Activated naive CD4-positive, alpha-beta T cell treated with anti-CD3 and anti-CD28 coated beads for 36 hours (primary cell): ENCODE measurements at regions of chr19 and their contacts with region 1.

Region 1: DNA sequence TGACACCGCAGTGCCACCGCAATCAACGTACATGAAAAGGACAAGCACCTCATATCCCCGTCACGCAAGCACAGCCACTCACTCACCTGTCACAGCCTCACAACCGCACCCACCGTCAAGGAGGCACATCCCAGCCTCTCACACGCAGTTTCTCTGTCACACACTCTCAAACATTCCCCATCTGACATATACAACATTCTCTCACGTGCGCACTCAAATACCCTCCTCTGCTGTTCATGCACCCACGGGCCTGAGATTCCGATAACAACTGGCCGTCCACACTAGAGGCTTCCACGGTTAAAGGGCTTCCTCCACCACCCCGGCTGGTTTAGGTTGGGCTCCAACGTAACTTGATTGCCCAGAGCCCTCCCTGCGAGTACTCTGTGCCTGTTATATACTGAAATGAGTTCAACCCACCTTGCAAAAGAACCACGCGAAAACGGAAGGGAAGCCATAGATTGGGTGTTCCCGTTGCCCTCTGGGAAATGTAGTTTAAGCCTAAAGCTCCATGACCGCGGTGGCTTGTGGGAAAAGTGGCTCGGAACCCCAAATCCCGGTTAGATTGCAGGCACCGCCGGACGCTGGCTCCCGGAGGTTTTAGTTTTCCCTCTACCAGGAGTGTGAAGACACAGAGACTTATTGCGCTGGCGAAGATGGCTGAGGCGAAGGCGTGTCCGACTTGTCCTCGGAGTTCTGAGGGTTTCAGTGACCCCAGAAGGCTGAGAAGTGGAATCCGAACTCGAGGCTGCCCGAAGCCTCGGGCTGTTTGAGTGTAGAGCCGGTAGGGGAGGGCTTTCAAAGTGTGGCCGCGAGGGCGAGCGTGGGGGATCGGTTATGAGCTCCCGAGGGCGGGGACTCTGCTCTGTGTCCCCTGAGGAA is at the start of gene ZNF573:
- DNase-seq: peak; percentile 91
- H3K4me3 Mint-ChIP-seq: peak within 1 kb of the TSS; percentile 96
- H3K27ac Mint-ChIP-seq: peak within 1 kb of the TSS; percentile 99
- H3K4me1 Mint-ChIP-seq: peaks cover 25% of the 10 kb centered on the region
- H3K27me3 Mint-ChIP-seq: no peaks in the 10 kb centered on the region
- total RNA-seq, gene ZNF573: 6.1 to 7.3 TPM

Region 2: DNA sequence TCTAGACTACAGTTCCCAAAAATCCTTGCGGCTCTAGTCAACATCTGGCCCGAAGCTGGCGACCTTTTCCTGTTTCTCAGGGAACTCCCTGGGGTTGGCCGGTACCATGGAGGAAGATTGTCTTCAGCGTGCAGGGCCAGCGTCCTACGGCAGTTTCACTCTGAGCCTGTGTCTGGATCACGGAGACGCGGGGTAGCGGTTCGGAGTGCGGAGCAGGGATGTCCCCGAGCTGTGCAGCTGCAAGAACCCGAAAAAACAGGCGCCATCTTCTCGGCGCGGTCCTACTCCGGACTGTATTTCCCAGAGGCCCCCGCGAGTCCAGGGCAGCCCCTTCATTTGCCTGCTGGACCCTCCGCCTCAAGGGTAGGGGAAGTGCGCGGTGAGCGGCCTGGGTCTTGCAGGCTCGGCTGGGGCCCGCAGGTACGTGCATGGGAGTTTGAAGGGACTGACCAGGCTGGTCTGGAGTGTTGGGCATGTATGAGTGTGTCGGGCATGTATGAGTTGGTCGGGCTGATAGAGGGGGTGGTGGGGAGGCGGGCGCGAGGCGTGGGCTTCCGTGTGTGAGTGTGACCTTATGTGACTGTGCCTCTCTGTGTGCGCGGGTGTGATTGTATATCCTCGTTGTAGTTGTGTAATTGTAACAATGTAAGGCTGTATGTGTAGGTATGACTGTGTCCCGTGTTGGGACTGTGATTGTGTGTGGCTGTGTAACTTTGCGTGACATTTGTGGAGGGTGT is 561.3 kb before region 1 on chr19 and contains the start of gene ZNF383:
- CTCF ChIA-PET with region 1: no interaction called
- intact Hi-C with region 1: loop called (anchors 1 kb)
- DNase-seq: peak; percentile 87
- H3K4me3 Mint-ChIP-seq: peak within 1 kb of the TSS; percentile 88
- H3K27ac Mint-ChIP-seq: peak within 1 kb of the TSS; percentile 92
- H3K4me1 Mint-ChIP-seq: peaks cover 16% of the 10 kb centered on the region
- H3K27me3 Mint-ChIP-seq: no peaks in the 10 kb centered on the region
- total RNA-seq, gene ZNF383: 8.4 to 9.1 TPM

Region 3: DNA sequence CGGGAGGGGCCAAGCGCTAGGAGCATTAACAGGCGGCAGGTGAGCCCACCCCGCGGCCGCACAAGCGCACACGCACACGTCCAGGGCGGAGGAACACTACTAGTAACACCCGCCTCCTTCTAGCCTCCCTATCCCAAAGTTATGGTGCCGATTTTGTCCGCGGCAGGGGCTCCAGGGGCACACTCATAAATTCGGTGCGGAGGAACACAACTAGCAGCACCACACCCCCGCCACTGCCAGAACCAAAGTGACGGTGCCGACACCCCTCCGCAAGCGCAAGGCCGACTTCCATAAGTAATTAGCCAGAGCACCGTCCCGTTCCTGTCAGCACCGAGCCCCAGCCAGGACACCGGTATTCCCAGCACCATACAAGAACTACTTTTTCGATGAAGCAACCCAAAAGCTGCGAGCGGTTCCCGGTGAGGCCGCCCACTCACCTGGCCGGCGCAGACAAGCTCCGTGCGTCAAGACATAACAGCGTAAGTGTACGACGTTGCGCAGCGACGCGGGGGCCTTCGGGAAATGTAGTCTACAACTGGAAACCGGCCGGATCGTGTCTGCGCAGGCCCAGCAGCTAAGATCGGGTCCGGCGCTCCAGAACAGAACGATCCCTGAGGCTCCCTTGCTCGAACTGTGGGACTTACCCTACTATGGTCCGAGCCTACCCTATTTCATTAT is 184.9 kb before region 1 on chr19 and contains the starts of genes ZNF540 and ZNF571:
- CTCF ChIA-PET with region 1: no interaction called
- intact Hi-C with region 1: loop called (anchors 1 kb)
- DNase-seq: peak; percentile 96
- H3K4me3 Mint-ChIP-seq: peak within 1 kb of the TSS; percentile 99
- H3K27ac Mint-ChIP-seq: peak within 1 kb of the TSS; percentile 97
- H3K4me1 Mint-ChIP-seq: peaks cover 17% of the 10 kb centered on the region
- H3K27me3 Mint-ChIP-seq: no peaks in the 10 kb centered on the region
- total RNA-seq, gene ZNF540: 1.0 to 1.9 TPM
- total RNA-seq, gene ZNF571: 2.8 to 3.5 TPM

Region 4: DNA sequence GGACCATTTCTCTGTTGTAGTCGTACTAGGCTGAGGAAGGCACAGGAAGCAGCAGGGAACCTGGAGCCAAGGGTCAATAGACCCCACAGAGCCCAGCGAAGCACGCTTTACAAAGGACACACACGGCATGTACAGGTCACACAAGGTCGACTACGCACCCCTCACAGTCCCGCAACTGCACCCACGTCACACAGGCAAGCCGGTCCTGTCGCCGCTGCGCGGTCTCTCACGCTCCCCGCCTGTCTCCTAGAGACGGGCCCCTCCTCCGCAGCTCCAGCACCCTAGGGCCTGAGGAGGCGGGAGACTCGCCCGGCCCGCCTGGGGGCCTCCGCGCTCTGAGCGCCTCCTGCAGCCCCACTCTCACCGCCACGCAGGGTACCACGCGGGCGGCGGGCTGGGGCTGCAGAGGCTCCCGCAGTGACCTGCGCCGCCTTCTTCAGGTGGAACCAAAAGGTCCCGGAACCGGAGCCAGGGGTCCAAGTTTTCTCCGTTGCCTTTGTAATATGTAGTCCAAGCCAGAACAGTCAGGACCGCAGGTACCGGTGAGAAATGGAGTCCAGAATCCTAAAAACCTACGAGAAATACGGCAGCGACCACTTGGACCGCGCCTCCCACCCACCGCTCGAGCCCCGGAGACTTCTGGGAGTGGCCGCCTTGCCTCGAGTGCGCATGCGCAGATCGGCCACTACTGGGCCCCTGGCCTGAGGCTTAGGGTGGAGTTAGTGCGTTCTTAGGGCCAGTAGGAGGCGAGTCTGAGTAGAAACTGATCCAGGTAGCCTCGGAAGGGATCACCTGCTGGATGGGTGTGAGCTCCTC is 60.0 kb before region 1 on chr19 and contains the start of gene ZNF607:
- CTCF ChIA-PET with region 1: no interaction called
- intact Hi-C with region 1: loop called (anchors 1 kb)
- DNase-seq: peak; percentile 86
- H3K4me3 Mint-ChIP-seq: peak within 1 kb of the TSS; percentile 81
- H3K27ac Mint-ChIP-seq: peak within 1 kb of the TSS; percentile 84
- H3K4me1 Mint-ChIP-seq: peaks cover 13% of the 10 kb centered on the region
- H3K27me3 Mint-ChIP-seq: no peaks in the 10 kb centered on the region
- total RNA-seq, gene ZNF607: 3.4 to 4.1 TPM

Region 5: GRCh38 chr19:37893845-37894575 is 114.6 kb after region 1 on chr19:
- CTCF ChIA-PET with region 1: no interaction called
- intact Hi-C with region 1: no loop called
- DNase-seq: no peak
- H3K4me3 Mint-ChIP-seq: no peak overlapping the region
- H3K27ac Mint-ChIP-seq: no peak overlapping the region
- H3K4me1 Mint-ChIP-seq: peaks cover 2% of the 10 kb centered on the region
- H3K27me3 Mint-ChIP-seq: peaks cover 9% of the 10 kb centered on the region

Region 6: DNA sequence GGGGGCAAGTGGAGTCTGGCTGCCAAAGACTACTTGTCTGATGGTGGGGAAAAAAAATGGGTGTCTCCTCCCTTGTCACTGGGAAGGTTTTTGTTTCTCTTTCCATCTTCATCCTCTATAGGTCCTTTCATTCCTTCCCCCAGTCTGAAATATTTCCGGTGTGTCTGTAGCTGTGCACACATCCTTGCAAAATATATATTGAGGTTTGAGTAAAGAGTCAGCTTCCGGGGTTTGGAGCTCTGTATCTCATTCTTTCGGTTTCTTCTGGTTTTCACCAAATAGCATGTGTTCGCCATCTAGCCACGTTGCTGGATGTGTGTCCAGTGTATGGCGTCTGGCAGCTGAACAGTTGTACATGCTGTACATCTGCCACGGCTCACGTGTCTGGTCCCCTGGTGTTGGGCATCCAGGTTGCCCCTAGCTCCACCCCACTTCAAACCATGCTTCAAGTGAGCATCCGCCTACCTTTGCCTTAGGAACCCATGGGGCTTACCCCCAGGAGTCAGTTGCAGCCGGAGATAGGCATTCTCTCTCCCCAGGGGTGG is 269.8 kb after region 1 on chr19:
- CTCF ChIA-PET with region 1: no interaction called
- intact Hi-C with region 1: loop called (anchors 1 kb)
- DNase-seq: peak; percentile 67
- H3K4me3 Mint-ChIP-seq: peak overlapping the region; percentile 73
- H3K27ac Mint-ChIP-seq: peak overlapping the region; percentile 96
- H3K4me1 Mint-ChIP-seq: peaks cover 43% of the 10 kb centered on the region
- H3K27me3 Mint-ChIP-seq: no peaks in the 10 kb centered on the region

Region 7: DNA sequence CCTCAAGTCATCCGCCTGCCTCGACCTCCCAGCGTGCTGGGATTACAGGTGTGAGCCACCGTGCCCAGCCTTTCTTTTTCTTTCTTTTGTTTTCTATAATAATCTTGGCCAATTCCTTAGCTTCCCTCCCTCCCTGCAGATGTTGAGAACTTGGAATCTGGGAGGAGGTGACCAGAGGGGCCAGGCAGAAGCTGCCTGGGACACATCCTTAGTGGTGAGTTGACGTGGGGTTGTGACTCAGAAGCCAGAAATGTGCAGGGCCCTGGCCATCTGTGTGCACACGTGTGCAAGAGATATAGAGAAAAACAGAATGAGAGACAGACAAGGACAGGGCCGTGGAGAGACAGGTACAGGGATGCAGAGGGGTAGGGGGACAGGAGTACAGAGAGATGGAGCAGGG is 281.9 kb after region 1 on chr19:
- CTCF ChIA-PET with region 1: no interaction called
- intact Hi-C with region 1: no loop called
- DNase-seq: no peak
- H3K4me3 Mint-ChIP-seq: no peak overlapping the region
- H3K27ac Mint-ChIP-seq: no peak overlapping the region
- H3K4me1 Mint-ChIP-seq: peaks cover 23% of the 10 kb centered on the region
- H3K27me3 Mint-ChIP-seq: no peaks in the 10 kb centered on the region